Breast epithelium (tissue), 4 donors: ENCODE measurements at regions of chr1 and their contacts with region 1.

Region 1: GRCh38 chr1:189874715-189875440 is 602.8 kb downstream of the BRINP3 start:
- DNase-seq: no peak
- H3K4me3 ChIP-seq: no peak overlapping the region
- H3K27ac ChIP-seq: no peak overlapping the region
- H3K4me1 ChIP-seq: no peaks in the 10 kb centered on the region
- H3K27me3 ChIP-seq: no peaks in the 10 kb centered on the region
- CTCF ChIP-seq: no peak
- POLR2A ChIP-seq: no peak

Region 2: DNA sequence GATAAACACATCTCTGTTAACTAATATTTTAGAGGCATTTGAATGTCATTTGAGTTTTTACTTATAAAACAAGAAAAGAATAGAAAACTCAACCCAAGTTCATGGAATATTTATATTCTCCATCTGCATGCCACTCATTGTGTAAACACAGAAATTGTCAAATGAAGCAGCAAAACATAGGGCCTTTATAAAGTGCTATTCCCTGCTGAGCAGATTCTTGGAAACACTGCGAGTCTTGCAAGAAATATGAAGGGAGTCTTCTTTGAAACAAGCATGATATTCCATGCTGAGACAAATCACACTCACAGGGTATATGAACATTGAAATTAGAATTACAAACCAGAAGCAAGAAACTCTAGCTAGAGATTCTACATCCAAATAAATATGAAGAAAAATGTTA is 53.0 kb before region 1 on chr1:
- intact Hi-C with region 1: loop called (anchors 2 kb)
- DNase-seq: no peak
- H3K4me3 ChIP-seq: no peak overlapping the region
- H3K27ac ChIP-seq: no peak overlapping the region
- H3K4me1 ChIP-seq: no peaks in the 10 kb centered on the region
- H3K27me3 ChIP-seq: no peaks in the 10 kb centered on the region
- CTCF ChIP-seq: no peak
- POLR2A ChIP-seq: no peak